ENCODE measurements at regions of chr4 and their contacts with region 1.

Region 1: GRCh38 chr4:125314676-125315575 is at the start of gene FAT4:
- DNase-seq: peak; percentile 98
- ATAC-seq: peak; percentile 96
- total RNA-seq, gene FAT4: 6.5 TPM

Region 2: DNA sequence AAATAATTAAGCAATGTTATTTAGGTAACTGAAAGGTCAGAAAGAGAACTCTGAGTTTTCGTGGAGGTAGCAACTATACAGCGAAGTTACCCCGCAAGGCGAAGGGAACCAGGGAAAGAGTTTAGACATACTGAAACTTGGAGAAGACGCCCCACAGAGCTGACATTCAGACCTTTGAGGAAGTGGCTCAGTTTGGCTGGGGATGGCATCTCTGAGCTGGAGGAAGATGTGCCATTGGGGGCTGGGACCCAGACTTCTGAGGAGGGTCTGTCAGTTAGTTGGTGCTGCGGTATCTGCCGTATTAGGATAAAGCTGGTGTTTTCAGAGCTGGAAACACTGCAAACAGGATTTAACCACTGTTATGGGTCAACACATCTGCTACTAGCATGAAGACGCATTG is 759.0 kb before region 1 on chr4:
- intact Hi-C with region 1: no loop called
- DNase-seq: no peak
- ATAC-seq: no peak

Region 3: GRCh38 chr4:125389713-125390112 is 74.8 kb after region 1 on chr4:
- intact Hi-C with region 1: loop called (anchors 5 kb)
- DNase-seq: no peak
- ATAC-seq: peak; percentile 34

Region 4: DNA sequence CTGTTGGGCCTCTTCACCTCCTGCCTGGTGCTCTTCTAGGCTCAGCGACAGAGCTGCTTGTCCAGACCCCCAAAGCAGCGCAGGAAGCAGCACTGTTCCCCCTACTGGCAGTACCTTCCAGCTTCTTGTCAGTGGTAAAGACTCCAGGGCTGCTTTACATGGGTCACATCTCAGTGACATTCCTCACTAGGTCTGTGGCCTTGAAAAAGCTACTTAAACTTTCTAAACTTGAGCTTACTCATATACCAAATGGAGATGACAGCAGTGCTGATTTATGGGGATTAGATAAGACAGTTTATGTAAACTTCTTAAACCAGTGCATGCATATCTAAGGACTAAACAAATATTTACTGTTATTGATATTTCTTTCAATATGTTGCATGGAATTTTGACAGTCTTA is 117.2 kb after region 1 on chr4:
- intact Hi-C with region 1: loop called (anchors 2 kb)
- DNase-seq: no peak
- ATAC-seq: peak; percentile 69

Region 5: GRCh38 chr4:125741825-125742452 is 427.0 kb after region 1 on chr4:
- intact Hi-C with region 1: loop called (anchors 2 kb)
- DNase-seq: no peak
- ATAC-seq: no peak

Region 6: GRCh38 chr4:125750828-125751466 is 436.0 kb after region 1 on chr4:
- intact Hi-C with region 1: loop called (anchors 1 kb)
- DNase-seq: no peak
- ATAC-seq: peak; percentile 91

Region 7: GRCh38 chr4:126604268-126604867 is 1289.4 kb after region 1 on chr4:
- intact Hi-C with region 1: loop called (anchors 5 kb)
- DNase-seq: no peak
- ATAC-seq: no peak